ENCODE measurements at regions of chr10 and their contacts with region 1.

Region 1: DNA sequence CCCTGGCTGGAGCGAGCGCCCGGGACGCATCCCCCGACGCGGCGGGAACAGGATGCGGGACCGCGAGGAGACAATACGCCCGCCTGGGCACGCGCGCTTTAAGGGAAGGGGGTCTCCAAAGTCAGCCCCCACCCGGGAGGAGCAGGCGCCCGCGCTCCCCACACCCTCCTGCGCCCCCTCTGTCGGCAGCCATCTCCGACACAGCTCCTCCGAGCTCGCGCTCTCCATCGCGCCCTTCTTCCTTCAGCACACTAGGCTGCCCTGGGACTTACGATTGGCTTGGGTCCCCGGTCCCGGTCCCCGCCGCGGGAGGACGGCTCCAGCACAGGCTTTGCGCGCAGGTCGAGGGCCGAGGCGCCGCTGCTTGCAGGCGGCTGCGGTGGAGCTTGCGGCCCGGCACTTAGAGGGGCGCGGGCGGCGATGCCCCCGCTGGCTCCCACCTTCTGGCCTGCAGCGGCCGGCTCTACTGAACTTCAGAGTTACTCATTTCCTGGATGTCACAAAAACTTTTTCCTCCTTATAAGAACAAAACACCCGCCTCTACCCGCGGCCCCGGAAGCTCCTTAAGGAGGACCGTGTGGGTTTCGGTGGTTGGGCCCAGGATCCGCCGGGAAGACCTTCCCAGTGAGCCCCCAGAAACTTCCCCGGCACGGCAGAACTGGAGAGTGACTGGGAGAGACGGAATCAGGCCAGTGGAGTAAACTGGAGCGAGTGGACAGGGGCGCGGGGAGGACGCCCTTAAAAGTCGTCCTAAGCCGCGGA is at the start of gene ITPRIP:
- DNase-seq: peak; percentile 81 to 88 (median 85)
- H3K4me3 ChIP-seq: peak within 1 kb of the TSS; percentile 51 to 80
- H3K4me3 Mint-ChIP-seq: peak within 1 kb of the TSS; percentile 96 to 100 (median 99)
- H3K27ac ChIP-seq: peak within 1 kb of the TSS; percentile 83
- H3K27ac Mint-ChIP-seq: peak within 1 kb of the TSS; percentile 97 to 100 (median 99)
- H3K4me1 ChIP-seq: peaks cover 48% of the 10 kb centered on the region
- H3K4me1 Mint-ChIP-seq: peaks cover 28 to 62% (median 42%) of the 10 kb centered on the region in 4 donors
- H3K27me3 ChIP-seq: no peaks in the 10 kb centered on the region
- H3K27me3 Mint-ChIP-seq: peaks cover 0 to 3% of the 10 kb centered on the region in 2 donors
- total RNA-seq, gene ITPRIP: 15.6 to 15.7 TPM

Region 2: GRCh38 chr10:104139221-104139620 is 198.9 kb before region 1 on chr10:
- CTCF ChIA-PET with region 1: no interaction called
- POLR2A ChIA-PET with region 1: no interaction called
- intact Hi-C with region 1: no loop called
- DNase-seq: no peak
- H3K4me3 ChIP-seq: no peak overlapping the region
- H3K4me3 Mint-ChIP-seq: no peak overlapping the region
- H3K27ac ChIP-seq: no peak overlapping the region
- H3K27ac Mint-ChIP-seq: no peak overlapping the region
- H3K4me1 ChIP-seq: no peaks in the 10 kb centered on the region
- H3K4me1 Mint-ChIP-seq: no peaks in the 10 kb centered on the region
- H3K27me3 ChIP-seq: no peaks in the 10 kb centered on the region
- H3K27me3 Mint-ChIP-seq: peaks cover 7 to 13% of the 10 kb centered on the region in 2 donors

Region 3: GRCh38 chr10:104254493-104255310 is 83.5 kb before region 1 on chr10 and contains the start of gene GSTO1:
- CTCF ChIA-PET with region 1: interaction called, 3 read pairs
- POLR2A ChIA-PET with region 1: interaction called, 11 read pairs
- intact Hi-C with region 1: no loop called
- DNase-seq: peak in 4 of 5 donors; percentile 22 to 62 (median 31)
- H3K4me3 ChIP-seq: peak within 1 kb of the TSS; percentile 45 to 56
- H3K4me3 Mint-ChIP-seq: peak within 1 kb of the TSS; percentile 84 to 99 (median 98)
- H3K27ac ChIP-seq: peak within 1 kb of the TSS; percentile 75
- H3K27ac Mint-ChIP-seq: peak within 1 kb of the TSS; percentile 82 to 98 (median 96)
- H3K4me1 ChIP-seq: peaks cover 46% of the 10 kb centered on the region
- H3K4me1 Mint-ChIP-seq: peaks cover 36 to 54% (median 44%) of the 10 kb centered on the region in 4 donors
- H3K27me3 ChIP-seq: no peaks in the 10 kb centered on the region
- H3K27me3 Mint-ChIP-seq: peaks cover 0 to 2% of the 10 kb centered on the region in 2 donors
- total RNA-seq, gene GSTO1: 52.8 to 54.7 TPM

Region 4: DNA sequence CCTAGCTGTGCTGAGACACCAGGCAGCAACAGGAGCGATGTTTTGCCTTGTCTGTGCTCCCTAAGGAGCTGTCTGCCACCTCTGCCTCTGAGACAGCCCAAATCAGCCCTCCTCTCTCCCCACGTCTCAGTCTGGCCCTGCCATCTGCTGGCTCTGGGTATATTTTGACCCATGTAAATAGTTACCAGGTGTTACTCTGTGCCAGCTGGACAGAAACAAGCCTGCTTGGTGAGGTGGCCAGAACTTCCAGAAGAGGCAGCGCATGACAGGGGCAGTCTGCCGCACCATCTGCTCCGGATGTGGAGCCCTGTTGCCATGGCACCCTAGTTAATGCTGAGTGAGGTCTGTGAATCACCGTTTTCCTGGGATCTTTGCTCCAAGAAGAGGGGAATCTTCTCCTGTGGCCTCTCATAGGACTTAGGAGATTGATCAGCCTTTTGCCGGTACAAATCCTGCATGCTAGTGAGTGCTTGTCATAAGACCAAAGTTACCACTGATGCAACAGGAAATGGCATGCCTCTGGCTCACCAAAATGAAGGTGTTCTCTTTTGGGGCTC is 37.3 kb before region 1 on chr10:
- CTCF ChIA-PET with region 1: interaction called, 100 read pairs
- POLR2A ChIA-PET with region 1: interaction called, 126 read pairs
- intact Hi-C with region 1: loop called (anchors 1 kb)
- DNase-seq: peak in 1 of 5 donors; percentile 25
- H3K4me3 ChIP-seq: no peak overlapping the region
- H3K4me3 Mint-ChIP-seq: peak overlapping the region in 7 of 8 donors; percentile 3 to 58 (median 29)
- H3K27ac ChIP-seq: no peak overlapping the region
- H3K27ac Mint-ChIP-seq: peak overlapping the region in 3 of 7 donors; percentile 57 to 84 (median 63)
- H3K4me1 ChIP-seq: peaks cover 21% of the 10 kb centered on the region
- H3K4me1 Mint-ChIP-seq: peaks cover 15 to 53% (median 24%) of the 10 kb centered on the region in 4 donors
- H3K27me3 ChIP-seq: no peaks in the 10 kb centered on the region
- H3K27me3 Mint-ChIP-seq: peaks cover 3 to 7% of the 10 kb centered on the region in 2 donors

Region 5: DNA sequence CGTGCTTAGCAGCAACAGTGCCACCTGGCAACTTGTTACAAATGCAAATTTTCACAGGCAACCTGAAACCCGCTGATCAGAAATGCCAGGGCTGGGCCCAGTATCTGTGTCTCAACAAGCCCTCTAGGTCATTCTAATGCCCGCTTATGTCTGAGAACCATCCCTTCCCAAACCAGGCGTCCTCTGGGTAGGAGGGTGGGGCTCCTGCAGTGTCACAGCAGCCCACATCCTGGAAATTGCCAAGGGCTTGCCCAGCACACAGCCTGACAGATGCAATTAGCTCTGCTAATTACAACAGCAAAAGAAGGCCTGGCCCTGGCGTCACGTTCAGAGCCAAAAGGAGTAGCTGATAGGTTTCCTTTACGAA is 15.8 kb before region 1 on chr10:
- CTCF ChIA-PET with region 1: interaction called, 14 read pairs
- POLR2A ChIA-PET with region 1: interaction called, 179 read pairs
- intact Hi-C with region 1: loop called (anchors 2 kb)
- DNase-seq: peak in 2 of 5 donors; percentile 38 to 61
- H3K4me3 ChIP-seq: peak overlapping the region; percentile 31 to 42
- H3K4me3 Mint-ChIP-seq: peak overlapping the region; percentile 72 to 86 (median 81)
- H3K27ac ChIP-seq: peak overlapping the region; percentile 31
- H3K27ac Mint-ChIP-seq: peak overlapping the region; percentile 94 to 98 (median 95)
- H3K4me1 ChIP-seq: peaks cover 84% of the 10 kb centered on the region
- H3K4me1 Mint-ChIP-seq: peaks cover 63 to 100% (median 87%) of the 10 kb centered on the region in 4 donors
- H3K27me3 ChIP-seq: no peaks in the 10 kb centered on the region
- H3K27me3 Mint-ChIP-seq: no peaks in the 10 kb centered on the region

Region 6: GRCh38 chr10:104368381-104368780 is 30.2 kb after region 1 on chr10:
- CTCF ChIA-PET with region 1: no interaction called
- POLR2A ChIA-PET with region 1: no interaction called
- intact Hi-C with region 1: no loop called
- DNase-seq: no peak
- H3K4me3 ChIP-seq: no peak overlapping the region
- H3K4me3 Mint-ChIP-seq: no peak overlapping the region
- H3K27ac ChIP-seq: no peak overlapping the region
- H3K27ac Mint-ChIP-seq: no peak overlapping the region
- H3K4me1 ChIP-seq: no peaks in the 10 kb centered on the region
- H3K4me1 Mint-ChIP-seq: no peaks in the 10 kb centered on the region
- H3K27me3 ChIP-seq: peaks cover 4% of the 10 kb centered on the region
- H3K27me3 Mint-ChIP-seq: peaks cover 19 to 25% of the 10 kb centered on the region in 2 donors

Measured in CD4-positive, alpha-beta memory T cell (primary cell).